ENCODE measurements at regions of chr5 and their contacts with region 1.

Region 1: GRCh38 chr5:34898258-34898895 is 16.9 kb downstream of the RAD1 start:
- DNase-seq: peak; percentile 27
- ATAC-seq: peak; percentile 85
- H3K4me3 Mint-ChIP-seq: no peak overlapping the region
- H3K27ac Mint-ChIP-seq: no peak overlapping the region
- H3K4me1 Mint-ChIP-seq: no peaks in the 10 kb centered on the region
- H3K27me3 Mint-ChIP-seq: no peaks in the 10 kb centered on the region
- CTCF ChIP-seq: no peak

Region 2: DNA sequence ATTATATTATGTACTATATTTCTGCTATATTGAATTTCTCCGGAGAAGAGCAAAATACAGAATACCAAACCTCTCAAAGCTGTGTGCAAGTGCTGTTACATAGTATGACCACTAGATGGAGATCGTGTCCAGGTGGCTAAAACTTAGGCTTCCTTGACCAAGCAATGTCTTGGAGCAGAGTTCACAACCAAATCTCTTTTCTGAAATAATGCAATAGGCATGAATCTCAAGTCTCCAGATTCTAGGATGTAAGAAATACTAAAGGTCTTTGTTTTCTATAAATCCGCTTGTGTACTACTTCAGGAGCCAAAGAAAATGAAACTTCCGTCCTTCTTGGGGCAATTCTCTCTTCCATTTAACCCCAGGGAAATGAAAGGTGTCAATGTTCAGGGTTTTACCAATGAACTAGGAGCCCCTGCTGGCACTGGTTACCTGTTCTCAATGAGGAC is 423.8 kb before region 1 on chr5:
- CTCF ChIA-PET with region 1: interaction called, 7 read pairs
- POLR2A ChIA-PET with region 1: no interaction called
- intact Hi-C with region 1: loop called (anchors 1 kb)
- DNase-seq: no peak
- ATAC-seq: peak; percentile 70
- H3K4me3 Mint-ChIP-seq: no peak overlapping the region
- H3K27ac Mint-ChIP-seq: no peak overlapping the region
- H3K4me1 Mint-ChIP-seq: no peaks in the 10 kb centered on the region
- H3K27me3 Mint-ChIP-seq: peaks cover 8% of the 10 kb centered on the region
- CTCF ChIP-seq: peak; percentile 88

Region 3: GRCh38 chr5:34486160-34486848 is 412.1 kb before region 1 on chr5:
- CTCF ChIA-PET with region 1: interaction called, 50 read pairs
- POLR2A ChIA-PET with region 1: no interaction called
- intact Hi-C with region 1: loop called (anchors 1 kb)
- DNase-seq: peak; percentile 36
- ATAC-seq: peak; percentile 18
- H3K4me3 Mint-ChIP-seq: no peak overlapping the region
- H3K27ac Mint-ChIP-seq: no peak overlapping the region
- H3K4me1 Mint-ChIP-seq: peaks cover 3% of the 10 kb centered on the region
- H3K27me3 Mint-ChIP-seq: peaks cover 14% of the 10 kb centered on the region
- CTCF ChIP-seq: peak; percentile 71

Region 4: DNA sequence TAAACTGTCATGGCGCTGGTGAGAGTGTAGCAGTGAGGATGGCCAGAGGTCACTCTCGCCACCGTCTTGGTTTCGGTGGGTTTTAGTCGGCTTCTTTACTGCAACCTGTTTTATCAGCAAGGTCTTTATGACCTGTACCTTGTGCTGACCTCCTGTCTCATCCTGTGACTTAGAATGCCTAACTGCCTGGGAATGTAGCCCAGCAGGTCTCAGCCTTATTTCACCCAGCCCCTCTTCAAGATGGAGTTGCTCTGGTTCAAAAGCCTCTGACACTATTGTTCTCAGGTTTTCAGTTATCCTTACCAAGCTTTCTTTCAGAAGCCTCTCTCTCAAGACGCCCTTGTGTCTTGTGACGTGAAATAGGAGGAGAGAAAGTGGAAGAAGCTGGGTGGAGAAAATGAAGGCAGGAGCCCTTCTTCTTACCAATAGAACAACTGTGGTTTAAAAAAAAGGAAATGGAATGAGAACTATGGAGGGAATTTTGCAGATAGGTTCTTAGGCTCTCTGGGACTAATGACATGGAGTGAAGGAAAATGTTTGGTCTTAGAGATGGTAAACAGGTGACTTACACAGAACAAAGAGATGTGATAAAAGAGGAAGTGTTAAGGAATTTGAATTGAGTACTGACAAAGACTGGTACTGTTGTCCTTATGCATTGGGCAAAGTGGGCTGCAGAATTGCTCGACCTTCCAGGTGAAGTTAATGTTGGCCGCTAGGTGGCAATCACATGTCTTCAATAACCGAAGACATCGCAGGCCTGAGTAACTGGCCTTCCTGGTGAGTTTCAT is 375.6 kb before region 1 on chr5:
- CTCF ChIA-PET with region 1: interaction called, 73 read pairs
- POLR2A ChIA-PET with region 1: no interaction called
- intact Hi-C with region 1: loop called (anchors 1 kb)
- DNase-seq: no peak
- ATAC-seq: peak; percentile 71
- H3K4me3 Mint-ChIP-seq: no peak overlapping the region
- H3K27ac Mint-ChIP-seq: no peak overlapping the region
- H3K4me1 Mint-ChIP-seq: peaks cover 2% of the 10 kb centered on the region
- H3K27me3 Mint-ChIP-seq: no peaks in the 10 kb centered on the region
- CTCF ChIP-seq: no peak

Region 5: DNA sequence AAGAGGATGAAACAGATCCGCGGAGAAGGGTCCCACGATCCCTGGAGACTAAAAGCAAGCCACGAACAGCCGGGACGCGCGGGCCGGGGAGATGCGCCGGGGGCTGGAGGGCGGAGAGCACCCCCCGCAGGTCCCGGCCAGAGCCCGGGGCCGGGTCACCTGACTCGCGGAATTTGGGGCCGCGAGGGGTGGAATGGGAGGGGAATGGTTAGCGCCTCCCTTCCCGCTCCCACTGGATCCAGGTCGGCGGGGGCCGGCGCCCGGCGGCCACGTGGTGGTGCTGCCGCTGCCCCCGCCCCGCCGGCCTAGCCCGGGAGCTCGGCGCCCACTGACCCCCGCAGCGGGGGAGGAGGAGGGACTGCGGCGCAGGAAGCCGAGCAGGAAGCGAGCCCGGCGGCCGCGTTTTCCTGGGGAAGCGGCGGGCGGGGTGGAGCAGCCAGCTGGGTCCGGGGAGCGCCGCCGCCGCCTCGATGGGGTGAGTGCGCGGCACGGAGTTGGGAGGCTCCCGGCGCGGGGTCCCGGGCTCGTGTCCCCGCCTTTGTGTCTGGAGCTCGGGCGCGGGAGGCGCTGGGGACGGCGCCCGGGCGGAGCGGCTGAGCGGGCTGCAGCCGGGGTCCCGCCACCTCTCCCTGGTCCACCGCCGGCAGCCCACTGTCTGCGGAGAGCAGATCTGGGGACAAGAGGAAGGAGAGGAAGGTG is 242.2 kb before region 1 on chr5 and contains the start of gene RAI14:
- CTCF ChIA-PET with region 1: no interaction called
- POLR2A ChIA-PET with region 1: no interaction called
- intact Hi-C with region 1: loop called (anchors 5 kb)
- DNase-seq: peak; percentile 21
- ATAC-seq: peak; percentile 48
- H3K4me3 Mint-ChIP-seq: peak within 1 kb of the TSS; percentile 88
- H3K27ac Mint-ChIP-seq: peak within 1 kb of the TSS; percentile 13
- H3K4me1 Mint-ChIP-seq: peaks cover 20% of the 10 kb centered on the region
- H3K27me3 Mint-ChIP-seq: peaks cover 28% of the 10 kb centered on the region
- CTCF ChIP-seq: no peak
- total RNA-seq, gene RAI14: 1.1 and 1.6 TPM in 2 replicates

Region 6: DNA sequence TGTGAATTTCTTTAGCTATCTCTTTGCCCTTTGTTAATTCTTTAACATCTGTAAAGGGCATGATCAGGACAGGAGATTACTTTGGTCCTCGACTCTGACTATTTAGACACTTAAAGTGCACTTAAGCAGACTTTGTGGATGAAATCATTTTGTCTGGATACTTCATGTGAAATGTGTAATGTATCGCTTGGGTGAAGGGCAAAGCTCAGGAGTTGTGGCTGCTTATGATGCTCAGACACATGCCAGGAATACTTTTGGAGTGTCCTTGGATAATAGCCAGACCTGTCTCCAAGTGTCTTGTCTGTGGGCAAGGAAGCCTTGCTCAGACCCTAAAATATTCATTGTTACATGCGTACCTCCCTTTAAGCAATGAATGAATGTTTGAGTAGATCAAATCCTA is 154.5 kb before region 1 on chr5:
- CTCF ChIA-PET with region 1: no interaction called
- POLR2A ChIA-PET with region 1: no interaction called
- intact Hi-C with region 1: loop called (anchors 1 kb)
- DNase-seq: no peak
- ATAC-seq: no peak
- H3K4me3 Mint-ChIP-seq: no peak overlapping the region
- H3K27ac Mint-ChIP-seq: no peak overlapping the region
- H3K4me1 Mint-ChIP-seq: peaks cover 53% of the 10 kb centered on the region
- H3K27me3 Mint-ChIP-seq: no peaks in the 10 kb centered on the region
- CTCF ChIP-seq: no peak